ENCODE measurements at regions of chr3 and their contacts with region 1.

Region 1: GRCh38 chr3:35965908-35966307 is 326.6 kb downstream of the ARPP21 start:
- DNase-seq: no peak
- ATAC-seq: no peak

Region 2: GRCh38 chr3:36700537-36701248 is 734.8 kb after region 1 on chr3:
- intact Hi-C with region 1: loop called (anchors 2 kb)
- DNase-seq: no peak
- ATAC-seq: peak; percentile 70